Activated T-helper 2 cell treated with anti-CD3 and anti-CD28 coated beads, Interferon-gamma antibody, Interleukin-2, Interleukin-4, amounts not matched to agents 10 μg/mL and 5 μg/mL and 100 μg/mL, durations not matched to agents 14 hours and 24 hours and 36 hours (primary cell): ENCODE measurements at regions of chr22 and their contacts with region 1.

Region 1: DNA sequence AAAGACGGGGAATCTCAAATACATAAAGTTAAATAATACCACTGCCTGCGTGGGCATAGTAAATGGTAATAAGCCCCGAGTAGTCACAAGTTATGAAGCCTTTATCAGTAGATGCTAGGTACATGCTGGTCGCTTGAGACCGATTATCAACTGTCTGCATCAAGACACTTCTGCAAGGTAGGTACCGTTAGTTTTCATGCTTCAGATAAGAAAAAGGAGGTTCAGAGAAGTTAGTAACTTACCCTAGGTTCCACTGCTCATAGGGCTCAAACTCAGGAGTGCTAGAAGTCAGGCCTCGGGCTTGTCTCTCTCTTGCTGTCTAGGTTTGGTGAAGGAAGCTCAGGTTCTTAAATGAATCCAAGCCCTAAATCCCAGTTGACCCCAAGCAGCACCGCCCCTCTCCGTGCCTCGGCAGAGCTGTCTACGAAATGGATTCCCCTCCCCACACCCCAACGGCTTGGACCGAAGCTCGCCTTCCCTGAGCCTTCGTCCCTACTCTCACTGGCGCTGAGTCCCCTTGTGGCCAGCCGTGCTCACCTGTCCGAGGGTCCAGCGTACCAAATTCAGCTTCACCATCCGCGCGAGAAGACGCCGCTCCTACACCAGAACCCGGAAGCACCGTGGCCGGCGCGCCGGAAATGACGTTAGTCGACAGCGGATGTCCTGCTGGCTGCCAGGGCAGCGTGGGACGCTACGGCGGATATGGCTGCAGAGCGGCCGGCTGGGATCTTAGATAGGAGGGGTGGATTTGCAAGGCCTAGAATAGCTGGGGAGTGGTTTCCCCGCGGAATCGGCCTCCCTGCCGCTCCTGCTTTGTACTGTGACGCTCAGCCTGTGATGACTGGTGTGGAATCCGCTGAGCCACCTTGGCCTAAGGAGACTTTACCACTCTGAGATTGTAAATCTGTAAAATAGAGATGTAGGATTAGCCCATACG is at the start of gene TFIP11:
- DNase-seq: peak; percentile 88
- H3K4me3 Mint-ChIP-seq: peak within 1 kb of the TSS; percentile 100
- H3K27ac Mint-ChIP-seq: peak within 1 kb of the TSS; percentile 97
- H3K4me1 Mint-ChIP-seq: peaks cover 27% of the 10 kb centered on the region
- H3K27me3 Mint-ChIP-seq: no peaks in the 10 kb centered on the region
- total RNA-seq, gene TFIP11: 49.7 and 55.0 TPM in 2 replicates

Region 2: GRCh38 chr22:26483439-26484359 is 28.4 kb before region 1 on chr22 and contains the starts of genes HPS4 and SRRD:
- intact Hi-C with region 1: loop called (anchors 2 kb)
- DNase-seq: peak; percentile 90
- H3K4me3 Mint-ChIP-seq: peak within 1 kb of the TSS; percentile 89
- H3K27ac Mint-ChIP-seq: peak within 1 kb of the TSS; percentile 86
- H3K4me1 Mint-ChIP-seq: peaks cover 60% of the 10 kb centered on the region
- H3K27me3 Mint-ChIP-seq: no peaks in the 10 kb centered on the region
- total RNA-seq, gene HPS4: 39.0 and 39.4 TPM in 2 replicates
- total RNA-seq, gene SRRD: 21.6 and 23.0 TPM in 2 replicates

Region 3: DNA sequence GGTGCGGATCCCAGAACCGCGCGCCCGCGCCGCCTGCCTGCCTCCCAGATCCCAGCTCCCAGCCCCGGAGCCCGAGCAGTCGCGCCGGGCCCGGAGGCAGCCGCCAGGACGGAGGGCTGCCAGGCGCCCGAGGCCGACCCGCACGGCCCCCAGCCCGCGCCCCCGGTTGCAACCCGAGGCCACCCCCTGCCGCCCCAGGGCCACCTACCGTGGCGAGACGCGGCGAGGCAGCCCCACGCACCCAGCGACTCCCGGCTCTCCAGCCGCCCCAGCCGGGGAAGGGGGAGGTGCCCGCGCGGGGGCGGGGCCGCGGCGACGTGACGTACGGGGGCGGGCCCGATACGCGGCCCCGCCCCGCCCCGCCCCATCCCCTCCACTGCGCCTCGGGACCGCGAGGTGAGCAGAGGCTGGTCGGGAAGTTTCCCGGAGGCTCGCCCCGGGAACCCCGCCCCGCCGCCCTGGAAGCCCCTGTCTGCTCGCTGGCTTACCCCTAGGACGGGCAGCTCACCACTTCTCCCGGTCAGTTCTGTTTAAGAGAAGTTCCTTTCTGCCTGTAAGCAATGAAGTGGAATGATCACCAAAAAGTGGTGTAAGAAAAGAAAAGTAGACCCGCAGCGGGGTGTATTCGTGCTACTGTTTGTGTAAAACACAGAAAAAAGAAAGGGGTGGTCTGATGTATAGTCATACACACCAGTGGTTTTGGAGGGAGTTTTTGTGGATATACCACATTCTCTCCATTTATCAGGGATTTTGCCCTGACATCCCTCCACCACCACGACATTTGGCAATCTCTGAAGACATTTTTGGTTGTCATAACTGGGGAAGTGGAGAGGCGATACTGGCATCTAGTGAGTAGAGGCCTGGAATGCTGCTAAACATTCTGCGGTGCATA is 78.0 kb after region 1 on chr22 and contains the start of gene TPST2:
- intact Hi-C with region 1: loop called (anchors 5 kb)
- DNase-seq: peak; percentile 70
- H3K4me3 Mint-ChIP-seq: peak within 1 kb of the TSS; percentile 87
- H3K27ac Mint-ChIP-seq: peak within 1 kb of the TSS; percentile 80
- H3K4me1 Mint-ChIP-seq: peaks cover 50% of the 10 kb centered on the region
- H3K27me3 Mint-ChIP-seq: no peaks in the 10 kb centered on the region
- total RNA-seq, gene TPST2: 13.7 and 14.2 TPM in 2 replicates